Common myeloid progenitor, CD34-positive (primary cell): ENCODE measurements at regions of chr12 and their contacts with region 1.

Region 1: DNA sequence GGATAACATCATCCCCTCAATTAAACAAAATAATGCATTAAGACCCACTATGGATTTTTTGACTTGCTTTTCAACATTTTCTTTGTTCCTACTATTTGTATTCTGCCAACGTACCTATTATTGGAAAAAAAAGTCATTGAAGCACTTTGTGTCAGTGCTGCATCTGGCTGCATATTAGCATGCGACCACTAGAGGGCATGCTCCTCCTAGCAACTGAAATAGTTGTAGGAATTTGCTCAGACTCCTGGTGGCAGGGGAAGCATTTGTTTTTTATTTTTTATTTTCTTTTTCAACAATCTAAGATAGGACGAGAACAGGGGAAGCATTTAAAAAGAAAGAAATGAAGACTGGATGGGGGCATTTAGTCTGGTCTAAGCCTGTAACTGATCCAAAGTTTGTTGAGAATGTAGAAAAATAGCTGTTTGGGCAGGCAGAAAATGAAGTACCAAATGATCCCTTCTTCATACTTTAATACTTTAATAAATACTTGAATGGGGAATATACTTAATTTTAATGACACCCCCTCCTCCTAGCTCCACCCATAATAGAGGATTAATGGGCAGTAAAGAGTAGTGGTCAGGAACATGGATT is 14.5 kb upstream of the CLEC4A start:
- DNase-seq: peak; percentile 82 to 90 (median 86)
- H3K4me3 ChIP-seq: peak overlapping the region in 1 of 7 experiments; percentile 16
- H3K27ac ChIP-seq: no peak overlapping the region
- H3K4me1 ChIP-seq: peaks cover 0 to 3% (median 0%) of the 10 kb centered on the region in 4 experiments
- H3K27me3 ChIP-seq: no peaks in the 10 kb centered on the region

Region 2: GRCh38 chr12:7374423-7375144 is 734.3 kb before region 1 on chr12:
- CTCF ChIA-PET with region 1: no interaction called
- POLR2A ChIA-PET with region 1: no interaction called
- DNase-seq: peak; percentile 58 to 76 (median 74)
- H3K4me3 ChIP-seq: no peak overlapping the region
- H3K27ac ChIP-seq: no peak overlapping the region
- H3K4me1 ChIP-seq: no peaks in the 10 kb centered on the region
- H3K27me3 ChIP-seq: peaks cover 0 to 1% (median 0%) of the 10 kb centered on the region in 5 experiments

Region 3: GRCh38 chr12:8120072-8120713 is 11.3 kb after region 1 on chr12:
- CTCF ChIA-PET with region 1: interaction called, 21 read pairs
- POLR2A ChIA-PET with region 1: no interaction called
- DNase-seq: no peak
- H3K4me3 ChIP-seq: no peak overlapping the region
- H3K27ac ChIP-seq: no peak overlapping the region
- H3K4me1 ChIP-seq: peaks cover 16 to 32% (median 26%) of the 10 kb centered on the region in 4 experiments
- H3K27me3 ChIP-seq: peaks cover 0 to 1% (median 0%) of the 10 kb centered on the region in 5 experiments

Region 4: DNA sequence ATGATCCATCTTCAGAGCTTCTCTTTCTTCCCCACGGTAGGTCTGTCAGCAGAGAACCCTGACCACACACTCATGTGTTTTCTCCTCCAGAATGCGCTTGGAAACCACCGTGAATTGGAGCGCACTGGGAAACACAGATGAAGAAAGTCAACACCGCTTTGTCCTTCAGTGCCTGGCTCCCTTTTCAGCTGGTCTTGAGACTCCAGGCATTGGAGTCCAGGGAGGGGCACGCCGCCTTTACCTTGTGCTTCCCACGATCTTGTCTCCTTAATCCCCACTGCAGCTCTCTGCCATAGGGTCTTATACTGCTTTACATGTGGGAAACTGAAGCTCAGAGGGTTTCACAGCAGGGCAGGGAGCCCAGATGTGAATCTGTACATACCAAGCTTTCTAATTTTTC is 117.5 kb after region 1 on chr12:
- CTCF ChIA-PET with region 1: interaction called, 24 read pairs
- POLR2A ChIA-PET with region 1: interaction called, 3 read pairs
- DNase-seq: peak in 2 of 3 donors; percentile 5 to 6
- H3K4me3 ChIP-seq: no peak overlapping the region
- H3K27ac ChIP-seq: no peak overlapping the region
- H3K4me1 ChIP-seq: peaks cover 0 to 7% (median 3%) of the 10 kb centered on the region in 4 experiments
- H3K27me3 ChIP-seq: no peaks in the 10 kb centered on the region